ENCODE measurements at regions of chr10 and their contacts with region 1.

Region 1: GRCh38 chr10:5089865-5090264 is 4.3 kb upstream of the AKR1C3 start:
- DNase-seq: no peak
- H3K4me3 ChIP-seq: no peak overlapping the region
- CTCF ChIP-seq: no peak
- POLR2A ChIP-seq: no peak

Region 2: GRCh38 chr10:5014936-5015335 is 74.9 kb before region 1 on chr10:
- intact Hi-C with region 1: loop called (anchors 2 kb)
- DNase-seq: no peak
- H3K4me3 ChIP-seq: no peak overlapping the region
- CTCF ChIP-seq: no peak
- POLR2A ChIP-seq: no peak

Region 3: DNA sequence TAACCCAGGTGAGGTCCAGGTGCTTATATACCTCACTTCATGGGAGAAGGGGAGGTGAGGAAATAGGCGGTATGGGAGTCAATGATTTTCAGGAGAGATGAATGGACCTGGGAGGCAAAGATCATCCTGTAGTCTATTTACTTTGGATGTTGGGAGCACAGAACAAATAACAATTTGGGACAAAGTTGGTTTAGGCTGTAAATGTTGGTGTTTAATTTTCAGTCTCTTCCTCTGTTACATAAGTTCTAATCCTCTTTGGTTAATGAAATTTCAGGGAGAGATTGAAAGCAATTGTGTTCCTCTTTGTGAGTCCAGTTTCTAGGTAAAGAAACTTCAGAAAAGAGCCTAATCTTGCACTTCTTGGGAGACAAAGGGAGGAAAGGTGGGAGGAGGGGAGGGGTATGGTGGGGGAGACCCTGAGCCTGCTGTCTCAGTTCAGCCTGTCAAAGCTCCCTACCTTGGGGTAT is 153.7 kb after region 1 on chr10:
- intact Hi-C with region 1: no loop called
- DNase-seq: no peak
- H3K4me3 ChIP-seq: no peak overlapping the region
- CTCF ChIP-seq: no peak
- POLR2A ChIP-seq: no peak